HCT116 (cell line): ENCODE measurements at regions of chr10 and their contacts with region 1.

Region 1: GRCh38 chr10:11757821-11758463 is 15.8 kb downstream of the ECHDC3 start:
- DNase-seq: peak; percentile 66
- ATAC-seq: peak; percentile 99
- H3K4me3 ChIP-seq: no peak overlapping the region
- H3K27ac ChIP-seq: no peak overlapping the region
- H3K4me1 ChIP-seq: no peaks in the 10 kb centered on the region
- H3K27me3 ChIP-seq: no peaks in the 10 kb centered on the region
- CTCF ChIP-seq: peak; percentile 77 to 98 (median 96)
- POLR2A ChIP-seq: no peak
- RAD21 ChIP-seq: peak; percentile 93

Region 2: GRCh38 chr10:11424456-11425297 is 333.3 kb before region 1 on chr10:
- CTCF ChIA-PET with region 1: interaction called, 14 read pairs
- POLR2A ChIA-PET with region 1: no interaction called
- RAD21 ChIA-PET with region 1: interaction called in 1 of 2 experiments, 3 read pairs
- intact Hi-C with region 1: loop called (anchors 2 kb)
- DNase-seq: peak; percentile 41
- ATAC-seq: peak; percentile 98
- H3K4me3 ChIP-seq: no peak overlapping the region
- H3K27ac ChIP-seq: no peak overlapping the region
- H3K4me1 ChIP-seq: no peaks in the 10 kb centered on the region
- H3K27me3 ChIP-seq: no peaks in the 10 kb centered on the region
- CTCF ChIP-seq: peak; percentile 61 to 95 (median 87); a peak in 5 of 6 replicates
- POLR2A ChIP-seq: no peak
- RAD21 ChIP-seq: peak; percentile 77

Region 3: GRCh38 chr10:11515596-11516430 is 242.1 kb before region 1 on chr10:
- CTCF ChIA-PET with region 1: interaction called, 27 read pairs
- POLR2A ChIA-PET with region 1: interaction called, 3 read pairs
- RAD21 ChIA-PET with region 1: interaction called, 10 to 13 read pairs
- intact Hi-C with region 1: loop called (anchors 1 kb)
- DNase-seq: peak; percentile 54
- ATAC-seq: peak; percentile 91
- H3K4me3 ChIP-seq: no peak overlapping the region
- H3K27ac ChIP-seq: no peak overlapping the region
- H3K4me1 ChIP-seq: peaks cover 0 to 14% of the 10 kb centered on the region in 2 experiments; a peak in 1 of 4 replicates
- H3K27me3 ChIP-seq: no peaks in the 10 kb centered on the region
- CTCF ChIP-seq: peak; percentile 77 to 85 (median 81)
- POLR2A ChIP-seq: no peak
- RAD21 ChIP-seq: peak; percentile 92